GM10248 (cell line): ENCODE measurements at regions of chr1 and their contacts with region 1.

Region 1: GRCh38 chr1:7808253-7808844 is 24.3 kb downstream of the PER3 start:
- DNase-seq: peak; percentile 39
- CTCF ChIP-seq: peak; percentile 54

Region 2: DNA sequence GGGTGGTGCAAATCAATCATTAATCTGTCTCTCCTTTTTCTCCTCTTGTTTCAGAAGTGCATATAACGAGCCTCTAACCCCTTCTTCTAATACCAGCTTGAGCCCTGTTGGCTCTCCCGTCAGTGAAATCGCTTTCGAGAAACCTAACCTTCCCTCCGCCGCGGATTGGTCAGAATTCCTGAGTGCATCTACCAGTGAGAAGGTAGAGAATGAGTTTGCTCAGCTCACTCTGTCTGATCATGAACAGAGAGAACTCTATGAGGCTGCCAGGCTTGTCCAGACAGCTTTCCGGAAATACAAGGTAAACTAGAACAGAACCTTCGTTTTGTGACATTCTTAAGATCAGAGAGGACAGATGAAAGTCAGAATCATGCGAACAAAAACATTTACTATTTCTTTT is 62.6 kb before region 1 on chr1:
- CTCF ChIA-PET with region 1: no interaction called
- POLR2A ChIA-PET with region 1: no interaction called
- DNase-seq: no peak
- CTCF ChIP-seq: no peak

Region 3: DNA sequence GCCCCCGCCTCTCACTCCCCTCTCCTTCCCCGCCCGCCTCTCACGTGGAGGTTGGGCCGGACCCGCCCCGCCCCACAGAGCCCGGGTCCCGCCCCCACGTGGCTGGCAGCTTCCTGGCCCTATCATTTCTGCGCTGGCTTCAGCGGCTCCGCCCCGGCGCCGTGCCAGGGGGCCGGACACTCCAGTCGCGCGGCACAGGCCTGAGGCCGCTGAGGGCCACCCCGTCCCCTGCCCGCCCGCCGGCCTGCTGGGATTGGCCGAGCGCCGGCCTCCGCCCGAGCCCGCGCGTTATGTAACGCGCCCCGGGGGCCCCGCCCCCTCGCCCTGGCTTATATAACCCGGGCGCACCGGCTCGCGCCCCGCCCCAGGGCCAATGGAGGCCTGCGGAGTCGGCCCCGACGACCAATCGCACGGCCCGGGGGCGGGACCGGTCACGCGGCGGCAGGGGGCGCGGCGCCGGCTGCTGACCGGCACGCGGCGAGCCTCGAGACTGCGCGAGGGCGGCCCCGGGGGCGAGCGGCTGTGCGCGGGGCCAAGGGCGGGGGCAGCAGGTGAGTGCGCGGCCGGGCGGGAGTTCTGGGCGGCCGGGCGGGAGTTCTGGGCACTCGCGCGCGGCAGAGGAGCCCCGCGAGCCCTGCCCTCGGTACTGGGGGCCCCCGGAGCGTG is 24.4 kb before region 1 on chr1 and contains the start of gene PER3:
- CTCF ChIA-PET with region 1: no interaction called
- POLR2A ChIA-PET with region 1: no interaction called
- DNase-seq: peak; percentile 95
- CTCF ChIP-seq: no peak

Region 4: GRCh38 chr1:7821282-7821681 is 12.9 kb after region 1 on chr1:
- CTCF ChIA-PET with region 1: interaction called, 10 read pairs
- POLR2A ChIA-PET with region 1: no interaction called
- DNase-seq: no peak
- CTCF ChIP-seq: no peak

Region 5: DNA sequence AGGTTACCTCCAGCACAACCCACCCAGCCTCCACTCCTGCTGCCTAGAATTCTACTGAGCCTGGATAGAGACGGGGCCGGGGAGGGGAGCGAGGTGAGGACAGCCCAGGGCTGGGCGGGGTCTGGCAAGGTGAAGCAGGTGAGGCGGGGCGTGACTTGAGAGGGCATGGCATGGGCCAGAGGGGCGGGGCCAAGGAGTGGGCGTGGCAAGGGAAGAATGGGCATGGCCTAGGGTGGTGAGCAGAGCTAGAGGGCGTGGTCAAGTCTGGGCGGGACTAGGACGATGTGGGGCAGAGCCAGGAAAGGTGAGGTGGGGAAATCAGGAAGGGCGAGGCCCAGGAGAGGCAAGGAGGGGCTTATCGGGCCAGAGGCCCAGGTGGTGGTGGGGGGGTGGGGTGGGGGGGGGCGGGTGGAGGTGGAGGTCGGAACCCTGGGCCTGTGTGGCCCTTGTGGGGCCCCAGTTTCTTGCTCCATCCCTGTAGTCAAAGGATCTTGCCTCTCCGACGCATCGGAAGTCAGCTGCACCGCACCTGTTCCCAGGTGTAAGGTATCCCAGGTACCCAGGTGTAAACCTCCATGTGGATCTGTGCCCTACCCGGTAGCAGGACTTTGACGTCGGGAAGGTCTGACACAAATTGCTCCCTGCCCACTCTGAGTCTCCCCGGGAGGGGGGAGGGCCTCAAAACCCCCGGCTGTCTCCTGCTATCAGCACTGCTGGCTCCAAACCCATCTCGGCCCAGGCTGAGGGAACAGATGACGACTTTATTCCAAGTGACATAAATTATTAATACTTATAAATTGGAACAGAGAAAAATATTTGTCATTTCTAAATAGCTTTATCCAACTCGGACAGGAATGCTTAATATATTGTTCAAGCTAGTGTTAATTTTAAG is 77.4 kb after region 1 on chr1:
- CTCF ChIA-PET with region 1: no interaction called
- POLR2A ChIA-PET with region 1: interaction called, 11 read pairs
- DNase-seq: no peak
- CTCF ChIP-seq: no peak